ENCODE measurements at regions of chr18 and their contacts with region 1.

Region 1: GRCh38 chr18:62584241-62585120 is 61.7 kb downstream of the ZCCHC2 start:
- H3K4me3 ChIP-seq: no peak overlapping the region
- H3K27ac ChIP-seq: no peak overlapping the region
- H3K4me1 ChIP-seq: peaks cover 5% of the 10 kb centered on the region
- CTCF ChIP-seq: peak; percentile 95

Region 2: DNA sequence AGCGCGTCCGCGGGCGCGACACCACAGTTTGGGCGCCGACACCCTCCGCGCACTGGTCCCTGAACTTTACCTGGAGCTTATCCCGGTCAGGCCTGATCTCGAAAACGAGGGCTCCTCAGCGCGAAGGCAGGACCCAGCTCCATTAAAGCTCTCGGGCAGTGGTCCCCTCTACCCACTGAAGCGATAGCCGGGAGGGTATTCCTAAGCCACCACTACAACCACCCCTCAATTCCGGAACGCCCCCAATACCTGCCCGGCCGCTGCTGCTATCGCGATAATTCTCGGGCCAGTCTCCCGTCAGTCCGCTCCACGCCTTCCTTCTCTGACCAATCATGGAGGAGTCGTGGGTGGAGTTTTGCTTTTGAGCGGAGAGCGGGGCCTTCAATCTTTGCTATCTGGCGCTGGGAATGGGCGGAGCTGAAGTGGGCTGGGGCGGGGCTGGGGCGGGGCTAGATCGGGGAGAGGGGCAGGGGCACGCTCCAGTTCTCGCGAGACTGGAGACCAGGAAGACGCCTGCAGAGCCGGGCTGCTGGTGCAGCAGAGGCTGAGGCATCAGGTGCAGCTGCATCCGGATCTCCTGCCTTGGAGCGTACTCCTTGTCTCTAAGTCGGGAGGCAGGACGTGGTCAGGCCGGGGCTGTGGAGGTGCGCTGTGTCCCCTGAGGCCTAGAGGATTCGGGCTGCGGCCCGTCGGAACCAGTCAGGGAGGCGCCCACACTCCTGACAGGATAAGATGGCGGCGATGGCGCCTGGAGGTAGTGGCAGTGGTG is 397.5 kb before region 1 on chr18 and contains the starts of genes PIGN and RELCH:
- CTCF ChIA-PET with region 1: interaction called, 15 read pairs
- POLR2A ChIA-PET with region 1: no interaction called
- H3K4me3 ChIP-seq: peak within 1 kb of the TSS; percentile 100
- H3K27ac ChIP-seq: peak within 1 kb of the TSS; percentile 91
- H3K4me1 ChIP-seq: peaks cover 10% of the 10 kb centered on the region
- CTCF ChIP-seq: no peak; the same call in 1 of the 2 replicates

Region 3: DNA sequence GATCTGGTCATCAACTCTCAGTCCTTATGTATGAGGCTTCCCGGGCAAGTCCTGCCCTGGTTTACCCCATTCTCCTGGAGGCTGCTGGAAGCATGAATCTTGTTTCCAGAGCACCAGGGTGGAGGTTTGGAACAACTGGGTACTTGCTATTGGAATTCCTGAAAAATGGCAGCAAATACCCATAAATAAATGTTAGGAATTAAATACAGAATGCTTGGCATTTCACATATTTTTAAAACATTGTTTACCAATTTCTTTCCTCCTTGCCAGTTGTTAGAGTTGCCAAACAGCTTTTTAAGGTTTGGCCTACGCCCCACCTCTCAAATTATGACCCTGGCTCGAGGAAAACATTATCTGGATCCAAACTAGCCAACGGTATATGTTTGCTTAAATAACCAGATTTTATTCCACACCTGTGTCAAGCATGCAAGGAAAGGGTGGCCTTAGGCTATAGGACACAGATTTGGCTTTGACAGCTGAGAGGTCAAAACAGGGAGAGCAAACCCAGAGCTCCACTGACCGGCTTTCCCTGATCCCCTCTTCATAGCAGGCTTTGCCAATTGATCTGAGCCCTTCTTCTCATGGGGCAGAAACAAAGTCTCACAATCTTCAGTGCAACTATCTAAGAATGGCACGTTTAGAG is 152.2 kb before region 1 on chr18:
- CTCF ChIA-PET with region 1: interaction called, 55 read pairs
- POLR2A ChIA-PET with region 1: no interaction called
- H3K4me3 ChIP-seq: no peak overlapping the region
- H3K27ac ChIP-seq: no peak overlapping the region
- H3K4me1 ChIP-seq: peaks cover 5% of the 10 kb centered on the region
- CTCF ChIP-seq: no peak

Region 4: DNA sequence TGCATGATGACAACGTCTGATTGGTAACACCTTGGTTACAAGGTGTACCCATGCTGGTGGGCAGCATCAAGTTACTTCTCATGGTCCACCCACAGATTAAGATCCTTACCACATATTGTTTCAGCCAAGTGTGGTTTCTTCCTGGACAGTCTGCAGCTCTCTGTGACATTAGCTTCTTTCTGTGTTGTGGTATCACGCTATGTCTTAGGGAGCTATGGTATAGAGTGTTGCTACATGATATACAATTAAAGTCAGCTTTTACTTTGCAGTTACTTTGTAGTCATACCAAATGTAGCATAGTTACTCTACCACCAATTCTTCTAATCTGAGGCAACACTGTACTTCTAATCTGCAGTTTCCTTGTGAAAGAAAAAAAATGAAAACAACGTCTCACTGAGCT is 12.8 kb before region 1 on chr18:
- CTCF ChIA-PET with region 1: interaction called, 50 read pairs
- POLR2A ChIA-PET with region 1: no interaction called
- H3K4me3 ChIP-seq: no peak overlapping the region
- H3K27ac ChIP-seq: no peak overlapping the region
- H3K4me1 ChIP-seq: no peaks in the 10 kb centered on the region; the same call in 1 of the 2 replicates
- CTCF ChIP-seq: no peak

Region 5: DNA sequence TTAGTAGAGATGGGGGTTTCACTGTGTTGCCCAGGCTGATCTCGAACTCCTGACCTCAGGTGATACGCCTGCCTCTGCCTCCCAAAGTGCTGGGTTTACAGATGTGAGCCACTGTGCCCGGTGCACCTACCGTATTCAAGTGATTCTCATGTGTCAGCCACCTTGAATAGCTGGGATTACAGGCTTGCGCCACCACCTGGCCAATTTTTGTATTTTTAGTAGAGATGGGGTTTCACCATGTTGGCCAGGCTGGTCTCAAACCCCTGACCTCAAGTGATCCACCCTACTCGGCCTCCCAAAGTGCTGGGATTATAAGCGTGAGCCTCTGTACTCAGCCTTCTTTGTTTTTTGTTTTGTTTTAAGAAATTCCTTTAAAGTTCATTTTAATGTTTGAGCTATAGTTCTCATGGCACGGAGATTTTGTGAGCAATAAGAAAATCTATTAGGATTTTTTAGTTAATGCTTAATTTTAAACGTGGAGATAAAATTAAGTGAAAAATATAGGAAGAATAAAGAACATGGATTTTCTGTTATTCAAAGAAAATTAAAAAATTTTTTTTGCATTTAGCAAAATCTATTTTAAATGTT is 373.5 kb after region 1 on chr18:
- CTCF ChIA-PET with region 1: interaction called, 22 read pairs
- POLR2A ChIA-PET with region 1: no interaction called
- H3K4me3 ChIP-seq: no peak overlapping the region
- H3K27ac ChIP-seq: no peak overlapping the region
- H3K4me1 ChIP-seq: no peaks in the 10 kb centered on the region
- CTCF ChIP-seq: peak; percentile 49; the same call in 1 of the 2 replicates

Region 6: GRCh38 chr18:63237881-63238667 is 653.6 kb after region 1 on chr18:
- CTCF ChIA-PET with region 1: no interaction called
- POLR2A ChIA-PET with region 1: no interaction called
- H3K4me3 ChIP-seq: no peak overlapping the region
- H3K27ac ChIP-seq: no peak overlapping the region
- H3K4me1 ChIP-seq: peaks cover 12% of the 10 kb centered on the region
- CTCF ChIP-seq: no peak

Measured in HEK293 (cell line).